K562 (cell line): ENCODE measurements at regions of chr4 and their contacts with region 1.

Region 1: DNA sequence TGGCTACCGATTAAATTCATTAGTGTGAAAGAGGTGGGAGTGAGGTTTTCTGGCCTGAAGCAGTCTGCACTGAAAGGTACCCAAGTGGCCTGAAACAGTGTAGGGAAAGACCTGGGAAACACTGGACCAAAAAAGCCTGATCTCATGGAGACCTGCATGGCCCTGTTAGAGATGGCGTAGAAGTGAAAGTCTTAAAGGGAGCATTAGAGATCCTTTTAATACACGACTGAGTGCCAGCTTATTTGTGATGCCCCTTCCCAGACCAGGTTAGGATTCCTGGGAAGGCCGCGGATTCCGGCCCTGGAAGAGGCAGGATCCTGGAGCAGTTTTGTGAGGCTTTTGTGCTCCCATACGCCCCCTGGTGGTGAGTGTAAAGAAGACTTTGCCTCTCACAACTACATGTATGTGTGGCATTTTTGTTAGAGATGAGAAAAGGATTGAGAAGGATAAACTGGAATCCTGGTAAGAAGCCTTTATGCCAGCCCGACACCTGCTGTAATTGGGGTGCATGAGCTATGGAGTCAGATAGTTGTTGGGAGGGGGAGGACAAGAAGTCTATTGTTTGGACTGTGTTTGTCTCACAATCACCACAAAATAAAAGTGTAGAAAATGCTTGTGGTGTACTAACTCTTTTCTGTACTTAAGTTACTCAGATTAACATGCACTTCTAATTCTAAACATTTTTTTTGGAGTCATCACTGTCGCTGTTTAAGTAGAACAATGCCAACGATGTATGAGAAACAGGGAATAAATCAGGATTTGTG is 54.0 kb downstream of the JADE1 start:
- DNase-seq: peak; percentile 53 to 72 (median 66)
- ATAC-seq: peak; percentile 87
- H3K4me3 ChIP-seq: no peak overlapping the region
- H3K27ac ChIP-seq: no peak overlapping the region
- H3K4me1 ChIP-seq: no peaks in the 10 kb centered on the region
- H3K27me3 ChIP-seq: no peaks in the 10 kb centered on the region
- CTCF ChIP-seq: peak; percentile 58 to 83 (median 70)
- EP300 ChIP-seq: no peak
- POLR2A ChIP-seq: no peak
- RAD21 ChIP-seq: peak; percentile 63 to 66

Region 2: DNA sequence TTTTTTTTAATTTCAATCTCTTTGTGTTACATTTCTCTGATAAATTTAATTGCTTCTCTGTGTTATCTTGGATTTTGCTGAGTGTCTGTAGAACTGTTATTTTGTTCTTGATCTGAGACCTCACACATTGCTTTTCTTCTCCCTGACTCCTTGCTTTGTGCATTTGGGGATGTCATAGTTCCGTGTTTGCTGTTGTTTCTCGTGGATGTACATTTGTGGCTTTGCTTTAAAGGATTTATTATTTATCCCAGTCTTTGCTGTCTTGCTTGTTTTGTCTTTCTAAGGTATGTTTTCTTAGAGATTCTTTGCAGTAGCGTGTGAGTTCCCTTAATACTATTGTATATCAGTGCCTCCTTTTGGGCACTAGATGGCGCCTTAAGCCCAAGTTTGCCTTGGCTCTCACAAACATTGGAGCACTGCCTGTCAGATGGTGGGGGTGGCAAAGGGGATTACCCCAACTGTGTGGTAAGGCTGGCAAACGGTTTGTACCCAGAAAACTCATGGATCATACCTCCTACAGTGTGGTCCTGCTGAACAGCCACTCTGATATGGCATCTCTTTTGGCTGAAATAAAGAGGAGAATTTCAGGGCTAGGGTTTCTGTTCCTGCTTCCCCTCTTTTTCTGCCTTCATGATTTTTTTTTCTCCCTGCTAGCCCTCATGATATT is 672.2 kb before region 1 on chr4:
- CTCF ChIA-PET with region 1: interaction called, 9 read pairs
- POLR2A ChIA-PET with region 1: no interaction called
- in situ Hi-C with region 1: loop called (anchors 25 kb)
- intact Hi-C with region 1: loop called (anchors 1 kb)
- DNase-seq: peak; percentile 65 to 77 (median 66)
- ATAC-seq: peak; percentile 99
- H3K4me3 ChIP-seq: no peak overlapping the region
- H3K27ac ChIP-seq: no peak overlapping the region
- H3K4me1 ChIP-seq: no peaks in the 10 kb centered on the region
- H3K27me3 ChIP-seq: no peaks in the 10 kb centered on the region
- CTCF ChIP-seq: peak; percentile 75 to 92 (median 87)
- EP300 ChIP-seq: no peak
- POLR2A ChIP-seq: no peak
- RAD21 ChIP-seq: peak; percentile 86 to 88

Region 3: GRCh38 chr4:128379860-128380259 is 483.6 kb before region 1 on chr4:
- CTCF ChIA-PET with region 1: no interaction called
- POLR2A ChIA-PET with region 1: no interaction called
- in situ Hi-C with region 1: no loop called
- intact Hi-C with region 1: loop called (anchors 10 kb)
- DNase-seq: peak; percentile 49 to 68 (median 57)
- ATAC-seq: peak; percentile 98
- H3K4me3 ChIP-seq: no peak overlapping the region
- H3K27ac ChIP-seq: no peak overlapping the region
- H3K4me1 ChIP-seq: no peaks in the 10 kb centered on the region
- H3K27me3 ChIP-seq: no peaks in the 10 kb centered on the region
- CTCF ChIP-seq: peak; percentile 63 to 78 (median 75)
- EP300 ChIP-seq: no peak
- POLR2A ChIP-seq: no peak
- RAD21 ChIP-seq: peak; percentile 43 to 56

Region 4: GRCh38 chr4:128427832-128428366 is 435.6 kb before region 1 on chr4:
- CTCF ChIA-PET with region 1: no interaction called
- POLR2A ChIA-PET with region 1: no interaction called
- in situ Hi-C with region 1: no loop called
- intact Hi-C with region 1: loop called (anchors 10 kb)
- DNase-seq: peak; percentile 33 to 72 (median 54)
- ATAC-seq: peak; percentile 98
- H3K4me3 ChIP-seq: no peak overlapping the region
- H3K27ac ChIP-seq: no peak overlapping the region
- H3K4me1 ChIP-seq: no peaks in the 10 kb centered on the region; a peak in 1 of 5 replicates
- H3K27me3 ChIP-seq: no peaks in the 10 kb centered on the region
- CTCF ChIP-seq: peak; percentile 67 to 85 (median 74)
- EP300 ChIP-seq: no peak
- POLR2A ChIP-seq: no peak
- RAD21 ChIP-seq: peak; percentile 67 to 82

Region 5: GRCh38 chr4:128574706-128575105 is 288.8 kb before region 1 on chr4:
- CTCF ChIA-PET with region 1: no interaction called
- POLR2A ChIA-PET with region 1: no interaction called
- in situ Hi-C with region 1: loop called (anchors 5 kb)
- intact Hi-C with region 1: loop called (anchors 5 kb)
- DNase-seq: peak; percentile 79 to 89 (median 80)
- ATAC-seq: peak; percentile 96
- H3K4me3 ChIP-seq: no peak overlapping the region
- H3K27ac ChIP-seq: no peak overlapping the region
- H3K4me1 ChIP-seq: peaks cover 6 to 8% of the 10 kb centered on the region in 2 experiments; a peak in 3 of 5 replicates
- H3K27me3 ChIP-seq: no peaks in the 10 kb centered on the region
- CTCF ChIP-seq: peak; percentile 75 to 90 (median 85)
- EP300 ChIP-seq: peak; percentile 11; the same call in 1 of the 2 replicates
- POLR2A ChIP-seq: no peak
- RAD21 ChIP-seq: peak; percentile 84

Region 6: GRCh38 chr4:128782076-128782715 is 81.3 kb before region 1 on chr4:
- CTCF ChIA-PET with region 1: interaction called, 6 read pairs
- POLR2A ChIA-PET with region 1: no interaction called
- in situ Hi-C with region 1: no loop called
- intact Hi-C with region 1: loop called (anchors 1 kb)
- DNase-seq: peak in 2 of 4 experiments; percentile 17 to 50
- ATAC-seq: peak; percentile 88
- H3K4me3 ChIP-seq: no peak overlapping the region
- H3K27ac ChIP-seq: no peak overlapping the region
- H3K4me1 ChIP-seq: no peaks in the 10 kb centered on the region
- H3K27me3 ChIP-seq: no peaks in the 10 kb centered on the region; a peak in 1 of 5 replicates
- CTCF ChIP-seq: peak; percentile 32 to 67 (median 36); a peak in 5 of 6 replicates
- EP300 ChIP-seq: no peak
- POLR2A ChIP-seq: no peak
- RAD21 ChIP-seq: peak; percentile 37 to 55; a peak in 3 of 4 replicates

Region 7: GRCh38 chr4:129167640-129168260 is 304.3 kb after region 1 on chr4:
- CTCF ChIA-PET with region 1: no interaction called
- POLR2A ChIA-PET with region 1: no interaction called
- in situ Hi-C with region 1: no loop called
- intact Hi-C with region 1: no loop called
- DNase-seq: peak in 2 of 4 experiments; percentile 8 to 40
- ATAC-seq: peak; percentile 97
- H3K4me3 ChIP-seq: no peak overlapping the region
- H3K27ac ChIP-seq: no peak overlapping the region
- H3K4me1 ChIP-seq: no peaks in the 10 kb centered on the region
- H3K27me3 ChIP-seq: no peaks in the 10 kb centered on the region
- CTCF ChIP-seq: peak; percentile 49 to 65 (median 52); a peak in 5 of 6 replicates
- EP300 ChIP-seq: no peak
- POLR2A ChIP-seq: no peak
- RAD21 ChIP-seq: peak; percentile 24 to 57; a peak in 3 of 4 replicates